ENCODE measurements at regions of chr2 and their contacts with region 1.

Region 1: GRCh38 chr2:189412330-189412953 is 28.8 kb upstream of the WDR75 start:
- DNase-seq: peak in 2 of 6 donors; percentile 7 to 48
- ATAC-seq: peak; percentile 64 to 90 (median 84)
- H3K4me3 ChIP-seq: no peak overlapping the region
- H3K27ac ChIP-seq: no peak overlapping the region
- H3K4me1 ChIP-seq: no peaks in the 10 kb centered on the region
- H3K27me3 ChIP-seq: no peaks in the 10 kb centered on the region
- CTCF ChIP-seq: peak in 3 of 4 donors; percentile 32 to 64 (median 38)

Region 2: GRCh38 chr2:188524519-188525113 is 887.8 kb before region 1 on chr2:
- intact Hi-C with region 1: loop called in 1 of 3 experiments (anchors 10 kb)
- DNase-seq: peak in 3 of 6 donors; percentile 4 to 24 (median 11)
- ATAC-seq: peak; percentile 74 to 90 (median 84)
- H3K4me3 ChIP-seq: no peak overlapping the region
- H3K27ac ChIP-seq: no peak overlapping the region
- H3K4me1 ChIP-seq: peaks cover 0 to 6% (median 0%) of the 10 kb centered on the region in 3 donors
- H3K27me3 ChIP-seq: no peaks in the 10 kb centered on the region
- CTCF ChIP-seq: peak; percentile 25 to 69 (median 64)

Region 3: DNA sequence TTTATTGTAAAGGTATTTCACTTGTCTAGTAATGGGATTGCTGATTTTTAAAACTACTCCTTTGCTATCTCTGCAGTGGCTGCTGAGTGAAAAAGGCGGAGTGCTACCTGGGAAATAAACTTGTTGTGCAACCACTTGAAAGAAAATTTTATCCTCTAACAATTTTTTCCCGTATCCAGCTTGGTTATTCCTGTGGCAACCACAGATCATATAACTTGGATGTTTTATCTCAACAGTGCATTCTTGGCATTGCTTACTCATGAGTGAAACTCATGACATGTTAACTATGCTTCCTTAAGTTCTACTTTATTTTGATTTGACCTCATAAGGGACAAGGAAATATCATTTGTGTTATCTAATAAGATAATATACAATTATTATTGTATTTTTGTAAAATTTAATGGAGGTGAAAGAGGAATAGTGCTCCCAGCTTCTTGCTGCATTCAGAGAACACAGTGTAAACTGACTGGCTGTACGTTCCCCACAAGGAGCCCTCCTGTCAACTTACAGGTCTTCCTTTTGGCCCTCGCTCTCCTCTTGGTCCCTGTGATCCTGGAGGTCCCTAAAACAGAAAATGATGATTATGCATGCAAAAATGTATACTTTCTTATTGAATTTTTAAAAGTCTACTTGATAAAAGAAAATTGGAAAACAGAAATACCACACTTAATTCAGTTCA is 315.5 kb before region 1 on chr2:
- intact Hi-C with region 1: loop called in 1 of 3 experiments (anchors 10 kb)
- DNase-seq: no peak
- ATAC-seq: peak in 1 of 4 donors; percentile 52
- H3K4me3 ChIP-seq: no peak overlapping the region
- H3K27ac ChIP-seq: no peak overlapping the region
- H3K4me1 ChIP-seq: no peaks in the 10 kb centered on the region
- H3K27me3 ChIP-seq: no peaks in the 10 kb centered on the region
- CTCF ChIP-seq: no peak